ENCODE measurements at regions of chr3 and their contacts with region 1.

Region 1: DNA sequence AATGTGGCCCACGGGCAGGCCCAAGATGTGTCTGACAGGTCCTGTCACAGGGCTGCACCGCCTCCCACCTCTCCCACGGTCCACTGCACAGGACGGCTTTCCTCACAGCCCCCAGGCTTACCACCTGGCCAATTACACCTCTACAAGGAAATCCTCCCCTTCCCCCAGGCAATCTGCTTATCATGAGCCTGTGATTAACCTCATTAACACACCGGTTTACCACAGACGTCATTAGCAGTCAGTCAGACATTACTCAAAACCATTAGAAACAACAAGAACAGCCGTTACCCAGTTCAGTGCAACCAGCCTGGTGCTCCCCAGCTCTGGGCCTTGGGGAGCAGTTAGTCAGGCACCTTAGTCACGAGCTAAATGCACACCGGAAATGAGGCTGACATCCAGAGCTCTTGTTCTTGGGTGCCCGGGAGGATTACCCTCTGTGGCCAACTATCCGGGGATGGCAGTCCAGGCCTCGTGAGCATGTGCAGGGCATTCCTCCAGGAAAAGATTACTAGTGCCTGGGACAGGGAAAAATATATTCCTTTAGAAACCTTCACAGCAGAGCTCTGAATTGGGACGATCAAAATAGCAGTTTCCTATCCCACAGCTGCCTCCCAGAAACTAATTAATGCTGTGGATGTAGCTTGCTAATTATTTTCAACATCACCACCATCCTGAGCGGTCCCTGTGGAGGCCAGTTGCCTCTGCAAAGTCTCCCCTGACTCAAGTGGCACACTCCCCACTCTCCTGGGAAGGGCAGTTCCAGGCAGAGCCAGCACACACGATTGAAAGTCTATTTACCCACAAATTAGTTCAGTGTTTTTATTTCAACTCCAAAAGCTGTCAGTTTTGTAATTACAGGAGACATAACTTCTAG is 117.4 kb upstream of the ZBED2 start:
- DNase-seq: no peak
- H3K4me3 ChIP-seq: no peak overlapping the region
- H3K27ac ChIP-seq: no peak overlapping the region
- H3K4me1 ChIP-seq: no peaks in the 10 kb centered on the region
- H3K27me3 ChIP-seq: no peaks in the 10 kb centered on the region
- CTCF ChIP-seq: no peak
- POLR2A ChIP-seq: no peak

Region 2: GRCh38 chr3:111676211-111677006 is 36.1 kb before region 1 on chr3:
- intact Hi-C with region 1: loop called (anchors 5 kb)
- DNase-seq: peak in 1 of 2 donors; percentile 97
- H3K4me3 ChIP-seq: no peak overlapping the region
- H3K27ac ChIP-seq: no peak overlapping the region
- H3K4me1 ChIP-seq: peaks cover 20% of the 10 kb centered on the region
- H3K27me3 ChIP-seq: no peaks in the 10 kb centered on the region
- CTCF ChIP-seq: no peak
- POLR2A ChIP-seq: no peak

Region 3: GRCh38 chr3:112065774-112066173 is 353.2 kb after region 1 on chr3:
- intact Hi-C with region 1: no loop called
- DNase-seq: no peak
- H3K4me3 ChIP-seq: no peak overlapping the region
- H3K27ac ChIP-seq: no peak overlapping the region
- H3K4me1 ChIP-seq: no peaks in the 10 kb centered on the region
- H3K27me3 ChIP-seq: no peaks in the 10 kb centered on the region
- CTCF ChIP-seq: no peak
- POLR2A ChIP-seq: no peak